Lower leg skin (tissue), 4 donors: ENCODE measurements at regions of chr14 and their contacts with region 1.

Region 1: GRCh38 chr14:80764496-80765200 is 176.9 kb downstream of the CEP128 start:
- DNase-seq: no peak
- H3K4me3 ChIP-seq: no peak overlapping the region
- CTCF ChIP-seq: no peak
- POLR2A ChIP-seq: no peak

Region 2: GRCh38 chr14:80751285-80751684 is 13.4 kb before region 1 on chr14:
- intact Hi-C with region 1: loop called (anchors 1 kb)
- DNase-seq: no peak
- H3K4me3 ChIP-seq: no peak overlapping the region
- CTCF ChIP-seq: no peak
- POLR2A ChIP-seq: no peak